Endothelial cell of umbilical vein (primary cell): ENCODE measurements at regions of chr2 and their contacts with region 1.

Region 1: DNA sequence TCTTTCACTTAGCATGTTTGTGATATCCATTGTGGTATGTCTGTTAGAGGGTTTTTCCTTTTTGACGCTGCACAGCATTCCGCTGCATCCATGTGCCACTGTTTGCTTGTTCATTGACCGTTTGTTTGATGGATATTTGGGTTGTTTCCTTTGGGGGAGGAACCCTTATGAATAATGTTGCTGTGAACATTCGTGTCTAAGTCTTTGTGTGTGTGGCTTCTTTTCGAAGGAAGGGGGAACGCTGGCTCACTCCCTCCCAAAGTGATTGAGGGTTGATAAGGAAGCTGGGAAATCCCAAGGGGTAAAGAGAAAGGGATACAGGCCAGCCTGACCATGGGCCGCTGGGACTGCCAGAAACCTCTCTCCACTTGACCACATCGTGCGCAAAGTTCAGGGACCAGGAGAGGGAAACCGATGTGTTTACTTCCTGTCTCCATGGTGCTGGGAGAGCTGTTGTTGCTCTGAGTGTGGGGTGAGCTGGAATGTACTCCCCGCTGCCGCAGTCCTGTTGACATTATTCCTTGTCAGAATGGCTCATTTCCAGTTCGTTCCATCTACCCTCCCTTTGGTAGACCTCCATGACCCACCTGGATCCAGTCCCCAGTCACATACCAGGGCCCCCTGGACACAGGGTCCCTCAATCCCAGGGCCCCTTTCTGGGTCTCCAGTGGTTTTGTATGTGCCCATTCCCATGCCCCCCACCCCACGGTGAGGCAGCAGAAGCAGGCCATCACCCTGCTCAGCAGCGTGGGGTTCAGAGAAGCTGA is 39.6 kb downstream of the HS1BP3 start:
- DNase-seq: peak; percentile 99
- H3K4me3 ChIP-seq: no peak overlapping the region
- H3K27ac ChIP-seq: peak overlapping the region; percentile 69
- H3K4me1 ChIP-seq: peaks cover 28% of the 10 kb centered on the region
- H3K27me3 ChIP-seq: no peaks in the 10 kb centered on the region
- CTCF ChIP-seq: no peak
- POLR2A ChIP-seq: no peak

Region 2: GRCh38 chr2:20468549-20469500 is 142.4 kb before region 1 on chr2:
- CTCF ChIA-PET with region 1: no interaction called
- POLR2A ChIA-PET with region 1: no interaction called
- dilution Hi-C with region 1: no loop called
- intact Hi-C with region 1: no loop called
- DNase-seq: no peak
- H3K4me3 ChIP-seq: no peak overlapping the region
- H3K27ac ChIP-seq: no peak overlapping the region
- H3K4me1 ChIP-seq: peaks cover 4% of the 10 kb centered on the region
- H3K27me3 ChIP-seq: no peaks in the 10 kb centered on the region
- CTCF ChIP-seq: no peak
- POLR2A ChIP-seq: no peak

Region 3: GRCh38 chr2:20514596-20515269 is 96.5 kb before region 1 on chr2:
- CTCF ChIA-PET with region 1: no interaction called
- POLR2A ChIA-PET with region 1: interaction called, 3 read pairs
- dilution Hi-C with region 1: no loop called
- intact Hi-C with region 1: loop called (anchors 2 kb)
- DNase-seq: peak; percentile 99
- H3K4me3 ChIP-seq: peak overlapping the region in 1 of 3 experiments; percentile 15
- H3K27ac ChIP-seq: peak overlapping the region; percentile 100
- H3K4me1 ChIP-seq: peaks cover 21% of the 10 kb centered on the region
- H3K27me3 ChIP-seq: no peaks in the 10 kb centered on the region
- CTCF ChIP-seq: no peak
- POLR2A ChIP-seq: no peak

Region 4: GRCh38 chr2:20568501-20569463 is 42.5 kb before region 1 on chr2:
- CTCF ChIA-PET with region 1: interaction called, 3 read pairs
- POLR2A ChIA-PET with region 1: no interaction called
- dilution Hi-C with region 1: no loop called
- intact Hi-C with region 1: loop called (anchors 1 kb)
- DNase-seq: peak; percentile 98
- H3K4me3 ChIP-seq: no peak overlapping the region
- H3K27ac ChIP-seq: peak overlapping the region; percentile 100
- H3K4me1 ChIP-seq: peaks cover 72% of the 10 kb centered on the region
- H3K27me3 ChIP-seq: no peaks in the 10 kb centered on the region
- CTCF ChIP-seq: no peak
- POLR2A ChIP-seq: peak; percentile 72

Region 5: GRCh38 chr2:20573620-20574422 is 37.4 kb before region 1 on chr2:
- CTCF ChIA-PET with region 1: interaction called, 3 read pairs
- POLR2A ChIA-PET with region 1: no interaction called
- dilution Hi-C with region 1: no loop called
- intact Hi-C with region 1: loop called (anchors 1 kb)
- DNase-seq: peak; percentile 98
- H3K4me3 ChIP-seq: no peak overlapping the region
- H3K27ac ChIP-seq: peak overlapping the region; percentile 100
- H3K4me1 ChIP-seq: peaks cover 98% of the 10 kb centered on the region
- H3K27me3 ChIP-seq: no peaks in the 10 kb centered on the region
- CTCF ChIP-seq: no peak
- POLR2A ChIP-seq: no peak

Region 6: GRCh38 chr2:20584637-20585321 is 26.5 kb before region 1 on chr2:
- CTCF ChIA-PET with region 1: no interaction called
- POLR2A ChIA-PET with region 1: interaction called, 3 read pairs
- dilution Hi-C with region 1: no loop called
- intact Hi-C with region 1: loop called (anchors 1 kb)
- DNase-seq: peak; percentile 89
- H3K4me3 ChIP-seq: no peak overlapping the region
- H3K27ac ChIP-seq: peak overlapping the region; percentile 76
- H3K4me1 ChIP-seq: peaks cover 43% of the 10 kb centered on the region
- H3K27me3 ChIP-seq: no peaks in the 10 kb centered on the region
- CTCF ChIP-seq: no peak
- POLR2A ChIP-seq: peak; percentile 24

Region 7: GRCh38 chr2:20595431-20596192 is 15.6 kb before region 1 on chr2:
- CTCF ChIA-PET with region 1: interaction called, 15 read pairs
- POLR2A ChIA-PET with region 1: no interaction called
- dilution Hi-C with region 1: no loop called
- intact Hi-C with region 1: loop called (anchors 1 kb)
- DNase-seq: peak; percentile 65
- H3K4me3 ChIP-seq: no peak overlapping the region
- H3K27ac ChIP-seq: peak overlapping the region; percentile 95
- H3K4me1 ChIP-seq: peaks cover 56% of the 10 kb centered on the region
- H3K27me3 ChIP-seq: no peaks in the 10 kb centered on the region
- CTCF ChIP-seq: no peak
- POLR2A ChIP-seq: peak; percentile 43

Region 8: DNA sequence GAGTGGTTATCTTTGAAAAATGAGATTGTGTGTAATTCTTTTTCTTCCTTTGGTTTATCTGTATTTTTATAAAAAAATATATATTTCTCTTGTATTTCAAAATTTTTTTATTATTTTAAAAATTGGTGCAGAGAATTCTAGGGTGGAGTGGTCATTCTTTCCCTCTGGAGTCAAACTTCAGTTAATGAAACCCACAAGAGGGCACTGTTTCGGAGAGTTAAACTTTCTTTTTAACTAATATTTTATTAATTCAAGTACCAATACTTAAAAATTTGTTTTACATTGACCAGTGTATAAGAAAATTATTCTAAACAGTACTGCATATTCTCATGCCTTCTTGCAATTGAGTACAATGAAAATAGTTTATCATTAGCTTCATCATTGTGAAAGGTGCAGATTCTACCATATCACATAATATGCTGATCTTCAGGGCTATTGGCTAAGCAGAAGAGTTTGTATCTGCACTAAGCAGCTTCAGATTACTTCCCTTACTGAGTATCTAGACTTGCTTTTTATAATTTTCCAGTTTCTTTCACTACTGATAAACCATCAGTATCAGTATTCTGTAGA is 10.4 kb before region 1 on chr2:
- CTCF ChIA-PET with region 1: interaction called, 15 read pairs
- POLR2A ChIA-PET with region 1: no interaction called
- dilution Hi-C with region 1: no loop called
- intact Hi-C with region 1: loop called (anchors 1 kb)
- DNase-seq: peak; percentile 71
- H3K4me3 ChIP-seq: no peak overlapping the region
- H3K27ac ChIP-seq: peak overlapping the region; percentile 35
- H3K4me1 ChIP-seq: peaks cover 44% of the 10 kb centered on the region
- H3K27me3 ChIP-seq: no peaks in the 10 kb centered on the region
- CTCF ChIP-seq: peak in 1 of 2 donors; percentile 16
- POLR2A ChIP-seq: no peak